Tibial artery (tissue), 4 donors: ENCODE measurements at regions of chr17 and their contacts with region 1.

Region 1: DNA sequence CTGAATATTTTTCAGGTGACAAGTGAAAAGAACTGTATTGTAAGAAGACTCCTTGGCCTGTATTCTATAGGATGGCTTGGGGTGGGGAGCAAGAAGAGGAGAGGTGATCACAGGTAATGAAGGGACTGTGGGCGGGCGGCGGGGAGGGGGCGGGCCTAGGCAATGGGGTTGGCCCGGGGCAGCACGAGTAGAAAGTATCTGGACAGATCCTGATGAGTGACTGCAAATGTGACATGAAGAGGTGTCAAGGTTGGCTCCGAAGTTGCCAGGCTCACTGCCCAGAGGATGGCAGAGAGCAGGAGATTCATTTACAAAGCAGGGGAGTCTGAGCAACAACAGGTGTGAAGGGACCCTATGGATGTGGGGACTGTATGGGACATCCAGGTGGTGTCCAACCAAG is 10.8 kb upstream of the G6PC1 start:
- DNase-seq: no peak
- H3K4me3 ChIP-seq: no peak overlapping the region
- H3K27ac ChIP-seq: peak overlapping the region; percentile 81 to 83
- H3K4me1 ChIP-seq: peaks cover 0 to 43% (median 38%) of the 10 kb centered on the region in 4 donors
- H3K27me3 ChIP-seq: no peaks in the 10 kb centered on the region
- CTCF ChIP-seq: no peak

Region 2: DNA sequence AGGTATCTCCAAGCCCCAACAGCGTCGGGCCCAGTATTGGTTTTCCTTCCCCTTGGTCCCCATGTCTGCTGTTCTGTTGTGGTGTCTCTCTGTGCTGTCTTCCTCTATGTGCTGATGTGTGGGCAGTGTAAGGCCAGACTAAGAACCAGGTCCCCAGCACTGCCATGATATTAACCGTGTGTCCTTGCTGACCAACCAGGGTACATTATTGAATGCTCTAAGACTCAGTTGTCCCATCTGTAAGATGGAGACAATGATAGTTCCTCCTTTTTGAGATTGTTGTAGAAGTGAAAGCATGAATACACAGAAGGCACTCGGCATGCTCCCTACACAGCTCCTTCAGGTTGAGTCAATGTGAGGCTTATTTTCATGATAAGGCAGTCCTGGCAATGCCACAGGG is 18.2 kb before region 1 on chr17:
- intact Hi-C with region 1: loop called (anchors 2 kb)
- DNase-seq: no peak
- H3K4me3 ChIP-seq: no peak overlapping the region
- H3K27ac ChIP-seq: no peak overlapping the region
- H3K4me1 ChIP-seq: peaks cover 0 to 9% (median 0%) of the 10 kb centered on the region in 4 donors
- H3K27me3 ChIP-seq: no peaks in the 10 kb centered on the region
- CTCF ChIP-seq: no peak